ENCODE measurements at regions of chr3 and their contacts with region 1.

Region 1: GRCh38 chr3:59575113-59576001 is 525.5 kb upstream of the CFAP20DC start:
- DNase-seq: peak; percentile 70
- H3K4me3 ChIP-seq: no peak overlapping the region
- H3K27ac ChIP-seq: no peak overlapping the region
- H3K4me1 ChIP-seq: peaks cover 30% of the 10 kb centered on the region
- H3K27me3 ChIP-seq: no peaks in the 10 kb centered on the region
- CTCF ChIP-seq: peak; percentile 95 to 97

Region 2: GRCh38 chr3:59313365-59313764 is 262.0 kb before region 1 on chr3:
- CTCF ChIA-PET with region 1: interaction called, 3 read pairs
- dilution Hi-C with region 1: no loop called
- in situ Hi-C with region 1: no loop called
- intact Hi-C with region 1: loop called (anchors 1 kb)
- DNase-seq: peak; percentile 26
- H3K4me3 ChIP-seq: no peak overlapping the region
- H3K27ac ChIP-seq: no peak overlapping the region
- H3K4me1 ChIP-seq: peaks cover 15% of the 10 kb centered on the region
- H3K27me3 ChIP-seq: no peaks in the 10 kb centered on the region
- CTCF ChIP-seq: peak; percentile 59 to 78